ENCODE measurements at regions of chr20 and their contacts with region 1.

Region 1: DNA sequence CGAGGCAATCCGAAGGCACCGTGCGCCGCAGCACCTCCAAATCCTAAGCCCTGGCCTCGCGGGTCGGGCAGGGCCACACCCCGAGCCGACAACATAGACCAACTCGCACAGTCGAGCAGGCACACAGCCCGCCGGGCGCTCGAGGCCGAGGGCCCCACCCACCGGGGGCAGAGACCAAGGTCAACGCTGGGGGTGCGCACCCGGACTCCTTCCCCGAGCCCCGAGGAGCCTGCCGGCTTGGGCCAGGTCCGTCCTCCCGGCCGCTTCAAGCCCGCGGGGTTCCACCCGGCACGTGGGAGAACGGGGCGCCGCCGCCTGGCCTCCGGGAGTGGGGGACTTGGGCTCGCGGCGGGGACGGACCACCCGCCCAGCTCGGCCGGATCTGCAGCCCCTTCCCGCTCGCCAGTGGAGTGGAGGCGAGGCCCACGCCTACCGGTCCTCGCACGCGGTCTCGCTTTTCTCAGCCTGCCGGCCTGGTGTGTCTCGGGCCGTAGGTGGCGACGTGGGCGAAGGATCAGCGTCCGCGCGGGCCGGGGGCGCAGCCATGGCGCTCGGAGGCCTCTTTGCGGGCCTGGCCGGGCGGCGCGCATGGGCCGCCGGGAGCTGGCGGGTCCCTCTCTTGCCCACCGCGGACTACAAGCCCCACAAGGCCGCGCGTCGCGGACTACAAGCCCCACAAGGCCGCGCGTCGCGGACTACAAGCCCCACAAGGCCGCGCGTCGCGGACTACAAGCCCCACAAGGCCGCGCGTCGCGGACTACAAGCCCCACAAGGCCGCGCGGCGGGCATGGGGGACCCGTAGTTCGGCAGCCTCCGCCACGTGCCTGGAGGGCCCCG is at the start of gene UCKL1:
- DNase-seq: peak; percentile 91
- ATAC-seq: peak; percentile 76
- H3K4me3 ChIP-seq: peak within 1 kb of the TSS; percentile 36 to 91 (median 84)
- H3K4me3 Mint-ChIP-seq: peak within 1 kb of the TSS; percentile 90
- H3K27ac ChIP-seq: peak within 1 kb of the TSS; percentile 57 to 85
- H3K27ac Mint-ChIP-seq: peak within 1 kb of the TSS; percentile 90
- H3K4me1 ChIP-seq: peaks cover 39 to 49% of the 10 kb centered on the region in 2 donors
- H3K4me1 Mint-ChIP-seq: peaks cover 37% of the 10 kb centered on the region
- H3K27me3 ChIP-seq: no peaks in the 10 kb centered on the region
- H3K27me3 Mint-ChIP-seq: no peaks in the 10 kb centered on the region
- CTCF ChIP-seq: no peak
- total RNA-seq, gene UCKL1: 104 and 106 TPM in 2 replicates

Region 2: GRCh38 chr20:63707549-63708300 is 248.3 kb before region 1 on chr20 and contains the starts of genes ARFRP1 and ZGPAT:
- CTCF ChIA-PET with region 1: no interaction called
- POLR2A ChIA-PET with region 1: interaction called, 6 read pairs
- intact Hi-C with region 1: loop called (anchors 1 kb)
- DNase-seq: peak; percentile 92
- ATAC-seq: peak; percentile 96
- H3K4me3 ChIP-seq: peak within 1 kb of the TSS in 4 of 5 experiments; percentile 63 to 80 (median 67)
- H3K4me3 Mint-ChIP-seq: peak within 1 kb of the TSS; percentile 87
- H3K27ac ChIP-seq: peak within 1 kb of the TSS; percentile 63 to 85
- H3K27ac Mint-ChIP-seq: peak within 1 kb of the TSS; percentile 86
- H3K4me1 ChIP-seq: peaks cover 21 to 28% of the 10 kb centered on the region in 2 donors
- H3K4me1 Mint-ChIP-seq: peaks cover 38% of the 10 kb centered on the region
- H3K27me3 ChIP-seq: no peaks in the 10 kb centered on the region
- H3K27me3 Mint-ChIP-seq: no peaks in the 10 kb centered on the region
- CTCF ChIP-seq: no peak
- total RNA-seq, gene ARFRP1: 73.3 and 75.5 TPM in 2 replicates
- total RNA-seq, gene ZGPAT: 46.1 and 47.5 TPM in 2 replicates

Region 3: DNA sequence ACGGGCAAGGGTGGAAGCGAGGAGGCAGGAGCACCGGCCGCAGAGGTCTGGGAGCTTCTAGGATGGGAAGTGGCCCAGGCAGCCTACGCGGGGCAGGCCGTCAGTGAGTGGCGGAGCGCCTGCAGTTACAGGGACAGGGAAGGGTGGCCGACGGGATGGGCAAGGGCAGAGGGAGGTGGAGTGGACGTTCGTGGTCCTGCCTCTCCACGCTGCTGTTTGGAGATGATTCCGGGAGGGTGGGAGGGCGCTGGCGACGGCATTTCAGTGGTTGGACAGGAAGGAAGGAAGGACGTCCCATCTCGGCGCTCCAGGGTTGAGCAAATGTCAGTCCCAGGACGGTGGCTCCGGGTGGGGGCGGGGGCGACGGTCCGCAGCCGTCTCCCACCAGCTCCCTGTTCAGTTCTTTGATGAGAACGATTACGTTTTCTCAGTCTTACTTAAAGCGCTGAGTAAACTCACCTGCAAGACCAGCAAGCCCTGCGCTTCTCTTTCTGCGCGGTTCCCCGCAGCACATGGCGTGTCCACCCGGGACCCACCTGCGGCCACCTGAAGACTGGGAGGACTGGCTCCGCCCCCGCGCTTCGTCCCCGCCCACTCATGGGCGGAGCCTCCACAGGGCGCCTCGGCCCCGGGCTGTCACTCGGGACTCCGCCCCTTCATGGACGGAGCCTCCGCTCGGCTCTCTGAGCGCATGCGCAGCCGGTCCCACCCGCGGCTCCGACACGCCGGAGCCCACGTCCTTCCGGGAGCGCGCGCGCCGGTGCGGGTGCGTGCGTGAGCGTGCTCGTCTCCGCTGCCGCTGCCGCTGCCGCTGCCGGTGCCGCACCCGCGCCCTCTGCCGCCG is 61.5 kb before region 1 on chr20 and contains the start of gene DNAJC5:
- CTCF ChIA-PET with region 1: interaction called, 4 read pairs
- POLR2A ChIA-PET with region 1: interaction called, 9 read pairs
- intact Hi-C with region 1: loop called (anchors 1 kb)
- DNase-seq: peak; percentile 98
- ATAC-seq: peak; percentile 94
- H3K4me3 ChIP-seq: peak within 1 kb of the TSS; percentile 38 to 81 (median 60)
- H3K4me3 Mint-ChIP-seq: peak within 1 kb of the TSS; percentile 93
- H3K27ac ChIP-seq: peak within 1 kb of the TSS; percentile 42 to 80
- H3K27ac Mint-ChIP-seq: peak within 1 kb of the TSS; percentile 91
- H3K4me1 ChIP-seq: peaks cover 16 to 36% of the 10 kb centered on the region in 2 donors
- H3K4me1 Mint-ChIP-seq: peaks cover 37% of the 10 kb centered on the region
- H3K27me3 ChIP-seq: no peaks in the 10 kb centered on the region
- H3K27me3 Mint-ChIP-seq: no peaks in the 10 kb centered on the region
- CTCF ChIP-seq: no peak
- total RNA-seq, gene DNAJC5: 32.6 and 33.3 TPM in 2 replicates

Region 4: DNA sequence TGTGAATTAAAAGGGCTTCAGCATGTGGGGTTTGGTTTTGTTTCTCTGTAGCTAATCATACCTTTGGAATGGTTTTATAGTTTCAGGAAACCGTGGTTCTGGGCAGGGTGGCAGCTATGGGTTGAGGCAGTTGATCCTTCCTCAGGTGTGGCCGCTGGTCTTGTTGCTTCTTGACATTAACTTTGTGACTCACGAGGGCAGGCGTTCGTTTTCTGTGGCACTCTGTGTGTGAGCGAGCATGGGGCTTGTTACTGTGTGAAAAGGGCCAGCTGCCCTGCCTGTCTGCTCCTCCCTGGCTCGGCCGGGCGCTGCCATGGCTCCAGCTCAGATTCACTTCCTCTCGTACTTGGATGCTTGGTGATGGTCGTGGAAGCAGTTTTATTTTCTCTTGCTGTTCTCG is 44.9 kb before region 1 on chr20:
- CTCF ChIA-PET with region 1: interaction called, 4 read pairs
- POLR2A ChIA-PET with region 1: no interaction called
- intact Hi-C with region 1: loop called (anchors 1 kb)
- DNase-seq: no peak
- ATAC-seq: no peak
- H3K4me3 ChIP-seq: no peak overlapping the region
- H3K4me3 Mint-ChIP-seq: no peak overlapping the region
- H3K27ac ChIP-seq: no peak overlapping the region
- H3K27ac Mint-ChIP-seq: no peak overlapping the region
- H3K4me1 ChIP-seq: peaks cover 4 to 17% of the 10 kb centered on the region in 2 donors
- H3K4me1 Mint-ChIP-seq: peaks cover 38% of the 10 kb centered on the region
- H3K27me3 ChIP-seq: no peaks in the 10 kb centered on the region
- H3K27me3 Mint-ChIP-seq: no peaks in the 10 kb centered on the region
- CTCF ChIP-seq: no peak

Region 5: DNA sequence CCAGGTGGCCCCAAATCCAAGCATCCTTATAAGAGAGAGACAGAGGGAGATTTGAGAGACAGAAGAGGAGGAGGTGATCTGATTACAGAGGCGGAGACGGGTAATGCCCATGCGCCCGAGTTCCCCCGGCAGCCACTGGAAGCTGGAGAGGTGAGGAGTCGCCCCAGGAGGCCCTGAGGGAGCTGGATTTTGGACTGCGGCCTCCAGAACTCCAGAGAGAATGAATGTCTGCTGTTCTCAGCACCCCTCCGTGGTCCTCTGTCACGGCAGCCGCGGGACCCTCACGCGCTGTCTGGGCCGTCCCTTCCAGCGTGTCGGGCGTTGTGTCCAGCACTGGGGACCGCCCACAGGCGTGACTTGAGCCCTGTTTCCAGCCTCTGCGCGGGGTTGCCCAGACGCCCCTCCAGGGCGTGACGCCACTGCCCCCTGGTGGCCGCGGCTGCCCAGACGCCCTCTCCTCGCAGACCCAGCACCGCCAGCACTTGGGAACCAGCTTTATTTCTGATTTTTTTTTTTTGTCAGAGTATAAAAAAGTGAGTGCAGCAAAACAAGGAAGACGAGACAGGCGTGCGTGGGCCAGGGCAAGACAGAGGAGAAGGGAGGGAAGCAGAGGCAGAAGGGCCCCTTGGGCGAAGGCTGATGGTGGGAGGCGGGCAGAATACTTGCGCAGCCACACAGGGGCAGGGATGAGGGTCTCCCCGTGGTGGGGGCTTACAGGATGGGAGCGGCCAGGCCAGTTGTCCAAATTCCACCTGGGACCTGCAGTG is 17.8 kb after region 1 on chr20:
- CTCF ChIA-PET with region 1: interaction called, 15 read pairs
- POLR2A ChIA-PET with region 1: interaction called, 3 read pairs
- intact Hi-C with region 1: no loop called
- DNase-seq: peak; percentile 83
- ATAC-seq: peak; percentile 67
- H3K4me3 ChIP-seq: no peak overlapping the region
- H3K4me3 Mint-ChIP-seq: no peak overlapping the region
- H3K27ac ChIP-seq: no peak overlapping the region
- H3K27ac Mint-ChIP-seq: no peak overlapping the region
- H3K4me1 ChIP-seq: peaks cover 20 to 32% of the 10 kb centered on the region in 2 donors
- H3K4me1 Mint-ChIP-seq: peaks cover 26% of the 10 kb centered on the region
- H3K27me3 ChIP-seq: no peaks in the 10 kb centered on the region
- H3K27me3 Mint-ChIP-seq: no peaks in the 10 kb centered on the region
- CTCF ChIP-seq: peak; percentile 98

Region 6: DNA sequence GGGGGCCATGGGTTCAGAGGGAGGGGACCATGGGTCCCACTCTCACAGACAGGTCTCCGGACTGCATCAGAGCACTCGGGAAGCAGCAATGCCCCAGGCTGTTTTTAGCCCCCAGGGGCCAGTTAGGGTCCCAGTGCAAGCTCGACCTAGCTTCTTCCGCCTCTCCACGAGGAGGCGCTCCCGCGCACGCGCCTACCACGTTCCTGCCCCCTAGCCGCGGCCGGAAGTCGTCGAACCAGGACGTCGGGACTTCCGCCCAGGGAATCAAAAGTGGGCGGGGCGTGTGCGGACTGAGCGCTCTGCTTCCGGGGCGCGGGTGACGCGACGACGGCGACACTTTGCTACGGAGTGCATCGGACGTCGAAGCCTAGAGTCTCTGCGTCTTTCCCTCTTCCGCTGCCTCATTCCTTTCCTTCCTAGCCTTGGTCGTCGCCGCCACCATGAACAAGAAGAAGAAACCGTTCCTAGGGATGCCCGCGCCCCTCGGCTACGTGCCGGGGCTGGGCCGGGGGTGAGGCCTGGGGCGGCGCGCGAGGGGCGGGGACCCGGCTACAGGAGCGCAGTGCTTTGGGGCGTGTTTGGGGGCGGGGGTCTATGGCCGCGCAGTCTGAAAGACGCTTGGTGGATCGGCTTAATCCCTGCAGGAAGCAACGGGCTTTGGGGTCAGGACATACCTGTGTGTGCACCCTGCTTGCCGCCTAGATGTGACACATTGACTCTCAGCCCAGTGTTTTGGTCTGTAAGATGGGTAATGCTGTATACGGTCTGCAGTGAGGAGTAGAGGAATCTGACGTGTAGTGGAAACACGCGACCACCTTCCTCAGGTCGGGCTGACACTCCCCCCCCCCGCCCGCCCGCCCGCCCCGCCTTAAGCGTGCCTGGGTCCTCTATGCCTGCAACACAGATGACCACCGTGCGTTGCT is 25.0 kb after region 1 on chr20 and contains the start of gene PRPF6:
- CTCF ChIA-PET with region 1: interaction called, 7 read pairs
- POLR2A ChIA-PET with region 1: interaction called, 7 read pairs
- intact Hi-C with region 1: loop called (anchors 1 kb)
- DNase-seq: peak; percentile 96
- ATAC-seq: peak; percentile 72
- H3K4me3 ChIP-seq: peak within 1 kb of the TSS; percentile 63 to 85 (median 79)
- H3K4me3 Mint-ChIP-seq: peak within 1 kb of the TSS; percentile 90
- H3K27ac ChIP-seq: peak within 1 kb of the TSS; percentile 69 to 87
- H3K27ac Mint-ChIP-seq: peak within 1 kb of the TSS; percentile 94
- H3K4me1 ChIP-seq: peaks cover 30 to 46% of the 10 kb centered on the region in 2 donors
- H3K4me1 Mint-ChIP-seq: peaks cover 53% of the 10 kb centered on the region
- H3K27me3 ChIP-seq: no peaks in the 10 kb centered on the region
- H3K27me3 Mint-ChIP-seq: no peaks in the 10 kb centered on the region
- CTCF ChIP-seq: peak; percentile 86
- total RNA-seq, gene PRPF6: 79.7 and 82.9 TPM in 2 replicates

Region 7: GRCh38 chr20:64038565-64039292 is 82.7 kb after region 1 on chr20:
- CTCF ChIA-PET with region 1: no interaction called
- POLR2A ChIA-PET with region 1: no interaction called
- intact Hi-C with region 1: no loop called
- DNase-seq: peak; percentile 84
- ATAC-seq: peak; percentile 86
- H3K4me3 ChIP-seq: peak overlapping the region in 4 of 5 experiments; percentile 64 to 85 (median 66)
- H3K4me3 Mint-ChIP-seq: peak overlapping the region; percentile 80
- H3K27ac ChIP-seq: peak overlapping the region in 1 of 2 donors; percentile 28
- H3K27ac Mint-ChIP-seq: peak overlapping the region; percentile 20
- H3K4me1 ChIP-seq: peaks cover 31 to 32% of the 10 kb centered on the region in 2 donors
- H3K4me1 Mint-ChIP-seq: peaks cover 23% of the 10 kb centered on the region
- H3K27me3 ChIP-seq: peaks cover 0 to 23% (median 11%) of the 10 kb centered on the region in 4 experiments
- H3K27me3 Mint-ChIP-seq: peaks cover 11% of the 10 kb centered on the region
- CTCF ChIP-seq: peak; percentile 79